Activated T-helper 1 cell treated with anti-CD3 and anti-CD28 coated beads, Interleukin-12 subunit alpha, Interleukin-12 subunit beta, Interleukin-2, Interleukin-4 antibody, amounts not matched to agents 30 ng/mL and 10 ng/mL and 1 ng/mL, durations not matched to agents 14 hours and 24 hours and 36 hours (primary cell): ENCODE measurements at regions of chr18 and their contacts with region 1.

Region 1: GRCh38 chr18:48675352-48675761 is 136.5 kb downstream of the CTIF start:
- DNase-seq: peak; percentile 74
- H3K4me3 Mint-ChIP-seq: no peak overlapping the region
- H3K27ac Mint-ChIP-seq: no peak overlapping the region
- H3K4me1 Mint-ChIP-seq: no peaks in the 10 kb centered on the region
- H3K27me3 Mint-ChIP-seq: no peaks in the 10 kb centered on the region

Region 2: DNA sequence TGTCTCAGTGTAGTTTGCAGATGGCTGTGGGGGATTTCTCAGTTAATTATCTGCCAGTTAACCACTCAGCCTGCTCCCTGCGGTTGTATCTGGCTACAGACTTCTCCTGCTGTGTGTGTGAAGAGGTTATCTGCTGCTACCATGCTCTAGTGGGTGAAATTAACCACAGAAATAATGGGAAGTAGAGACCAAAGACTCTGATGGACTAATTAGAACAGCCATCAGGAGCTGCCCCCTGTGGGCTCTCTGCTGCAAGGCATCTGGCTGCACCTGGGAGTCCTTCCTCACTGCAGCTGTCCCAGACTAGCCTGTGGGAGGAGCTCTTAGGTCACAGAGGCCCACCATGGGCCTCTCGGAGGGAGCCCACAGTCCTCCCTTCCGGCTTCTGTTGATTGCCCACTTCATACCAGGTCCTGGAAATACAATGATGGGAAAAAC is 69.9 kb before region 1 on chr18:
- intact Hi-C with region 1: no loop called
- DNase-seq: no peak
- H3K4me3 Mint-ChIP-seq: no peak overlapping the region
- H3K27ac Mint-ChIP-seq: no peak overlapping the region
- H3K4me1 Mint-ChIP-seq: no peaks in the 10 kb centered on the region
- H3K27me3 Mint-ChIP-seq: no peaks in the 10 kb centered on the region

Region 3: GRCh38 chr18:48777026-48777743 is 101.8 kb after region 1 on chr18:
- intact Hi-C with region 1: loop called (anchors 1 kb)
- DNase-seq: peak; percentile 59
- H3K4me3 Mint-ChIP-seq: no peak overlapping the region
- H3K27ac Mint-ChIP-seq: no peak overlapping the region
- H3K4me1 Mint-ChIP-seq: peaks cover 14% of the 10 kb centered on the region
- H3K27me3 Mint-ChIP-seq: no peaks in the 10 kb centered on the region

Region 4: DNA sequence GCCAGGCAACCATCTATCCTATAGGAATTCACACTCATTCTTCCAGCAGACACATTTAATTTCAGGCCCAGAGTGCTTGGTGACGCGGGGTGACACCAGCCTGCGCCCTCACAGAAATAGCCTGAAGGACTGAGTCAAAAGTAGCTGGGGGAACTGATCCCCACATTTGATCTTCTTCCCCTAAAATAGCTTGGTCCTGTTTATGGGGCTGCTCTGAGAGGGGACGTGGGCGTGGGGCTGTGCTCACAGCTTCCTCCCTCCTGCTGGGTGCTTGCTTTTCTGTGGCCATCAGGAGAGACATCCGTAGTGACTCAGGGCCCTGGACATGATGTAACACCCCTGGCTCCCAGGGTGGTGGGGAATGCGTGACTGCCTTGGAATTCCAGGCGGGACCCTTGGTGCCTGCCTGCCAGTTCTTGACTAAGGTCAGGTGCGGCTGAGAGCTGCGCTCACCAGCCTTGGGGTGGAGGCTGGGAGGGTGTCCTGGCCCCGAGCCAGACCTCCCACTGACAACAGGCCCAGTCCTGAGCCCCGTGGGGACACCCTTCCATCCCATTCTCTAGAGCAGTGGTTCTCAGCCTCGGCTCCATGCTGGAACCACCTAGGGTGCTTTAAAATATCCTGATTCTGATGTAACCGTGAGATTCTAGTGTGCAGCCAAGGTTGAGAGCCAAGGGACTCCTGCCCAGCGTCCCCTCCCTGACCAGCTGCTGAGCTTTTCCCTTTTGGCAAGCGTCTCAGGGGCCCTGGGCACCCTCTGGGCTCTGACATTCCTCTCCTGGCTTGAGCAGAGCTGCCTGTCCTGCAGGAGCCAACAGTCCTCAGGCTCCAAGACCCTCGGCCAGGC is 322.9 kb after region 1 on chr18:
- intact Hi-C with region 1: loop called (anchors 10 kb)
- DNase-seq: no peak
- H3K4me3 Mint-ChIP-seq: no peak overlapping the region
- H3K27ac Mint-ChIP-seq: no peak overlapping the region
- H3K4me1 Mint-ChIP-seq: peaks cover 12% of the 10 kb centered on the region
- H3K27me3 Mint-ChIP-seq: peaks cover 18% of the 10 kb centered on the region

Region 5: DNA sequence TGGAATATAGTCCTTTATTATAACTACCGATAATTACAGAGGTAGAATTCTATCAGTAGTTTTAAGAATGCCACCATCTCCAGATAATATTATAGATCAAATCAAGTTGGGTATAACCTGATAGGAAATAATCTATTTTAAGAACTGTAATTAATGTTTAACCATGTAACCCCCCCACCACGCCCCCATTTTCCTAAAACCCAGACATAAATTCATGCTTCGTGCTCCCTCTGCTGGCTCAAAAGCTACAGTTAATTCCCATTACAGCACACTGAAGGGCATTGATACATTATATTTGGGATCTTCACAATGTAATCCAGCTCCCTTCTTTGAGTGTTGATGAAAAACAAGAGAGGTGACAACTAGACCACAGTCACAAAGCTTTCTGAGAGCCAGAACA is 503.4 kb after region 1 on chr18:
- intact Hi-C with region 1: loop called (anchors 1 kb)
- DNase-seq: no peak
- H3K4me3 Mint-ChIP-seq: no peak overlapping the region
- H3K27ac Mint-ChIP-seq: no peak overlapping the region
- H3K4me1 Mint-ChIP-seq: peaks cover 33% of the 10 kb centered on the region
- H3K27me3 Mint-ChIP-seq: peaks cover 2% of the 10 kb centered on the region

Region 6: GRCh38 chr18:49412679-49413078 is 737.3 kb after region 1 on chr18:
- intact Hi-C with region 1: loop called (anchors 2 kb)
- DNase-seq: no peak
- H3K4me3 Mint-ChIP-seq: no peak overlapping the region
- H3K27ac Mint-ChIP-seq: peak overlapping the region; percentile 9
- H3K4me1 Mint-ChIP-seq: peaks cover 24% of the 10 kb centered on the region
- H3K27me3 Mint-ChIP-seq: no peaks in the 10 kb centered on the region

Region 7: GRCh38 chr18:49858309-49859020 is 1183.1 kb after region 1 on chr18:
- intact Hi-C with region 1: loop called (anchors 5 kb)
- DNase-seq: peak; percentile 38
- H3K4me3 Mint-ChIP-seq: no peak overlapping the region
- H3K27ac Mint-ChIP-seq: no peak overlapping the region
- H3K4me1 Mint-ChIP-seq: peaks cover 4% of the 10 kb centered on the region
- H3K27me3 Mint-ChIP-seq: no peaks in the 10 kb centered on the region